ENCODE measurements at regions of chr14 and their contacts with region 1.

Region 1: GRCh38 chr14:30994681-30995620 is 30.5 kb upstream of the AP4S1 start:
- DNase-seq: no peak
- H3K4me3 Mint-ChIP-seq: peak overlapping the region; percentile 10
- H3K27ac Mint-ChIP-seq: peak overlapping the region; percentile 66
- H3K4me1 Mint-ChIP-seq: peaks cover 47% of the 10 kb centered on the region
- H3K27me3 Mint-ChIP-seq: no peaks in the 10 kb centered on the region

Region 2: GRCh38 chr14:30966415-30967363 is 28.3 kb before region 1 on chr14:
- CTCF ChIA-PET with region 1: no interaction called
- intact Hi-C with region 1: loop called (anchors 1 kb)
- DNase-seq: no peak
- H3K4me3 Mint-ChIP-seq: no peak overlapping the region
- H3K27ac Mint-ChIP-seq: no peak overlapping the region
- H3K4me1 Mint-ChIP-seq: peaks cover 32% of the 10 kb centered on the region
- H3K27me3 Mint-ChIP-seq: no peaks in the 10 kb centered on the region

Measured in activated naive CD4-positive, alpha-beta T cell treated with anti-CD3 and anti-CD28 coated beads for 36 hours (primary cell).